ENCODE measurements at regions of chr20 and their contacts with region 1.

Region 1: GRCh38 chr20:1894951-1895673 is at the start of gene SIRPA:
- DNase-seq: peak in 2 of 3 donors; percentile 53 to 73
- H3K4me3 ChIP-seq: peak within 1 kb of the TSS; percentile 63 to 100 (median 80)
- H3K4me3 Mint-ChIP-seq: peak within 1 kb of the TSS; percentile 100
- H3K27ac ChIP-seq: peak within 1 kb of the TSS; percentile 77 to 98
- H3K27ac Mint-ChIP-seq: peak within 1 kb of the TSS; percentile 90 to 99 (median 95)
- H3K4me1 ChIP-seq: peaks cover 55 to 64% of the 10 kb centered on the region in 2 donors
- H3K4me1 Mint-ChIP-seq: peaks cover 76% of the 10 kb centered on the region
- H3K27me3 ChIP-seq: no peaks in the 10 kb centered on the region
- H3K27me3 Mint-ChIP-seq: peaks cover 0 to 2% (median 1%) of the 10 kb centered on the region in 3 donors
- CTCF ChIP-seq: no peak
- polyA plus RNA-seq, gene SIRPA: 28.4 to 126 (median 58.3) TPM

Region 2: GRCh38 chr20:1802385-1803060 is 92.6 kb before region 1 on chr20:
- intact Hi-C with region 1: loop called (anchors 1 to 2 kb)
- DNase-seq: peak; percentile 73 to 84 (median 83)
- H3K4me3 ChIP-seq: peak overlapping the region; percentile 55 to 78 (median 69)
- H3K4me3 Mint-ChIP-seq: peak overlapping the region; percentile 85 to 97
- H3K27ac ChIP-seq: peak overlapping the region; percentile 86 to 95
- H3K27ac Mint-ChIP-seq: peak overlapping the region; percentile 87 to 97 (median 94)
- H3K4me1 ChIP-seq: peaks cover 56 to 65% of the 10 kb centered on the region in 2 donors
- H3K4me1 Mint-ChIP-seq: peaks cover 56% of the 10 kb centered on the region
- H3K27me3 ChIP-seq: no peaks in the 10 kb centered on the region
- H3K27me3 Mint-ChIP-seq: peaks cover 0 to 1% (median 0%) of the 10 kb centered on the region in 3 donors
- CTCF ChIP-seq: peak; percentile 82

Region 3: DNA sequence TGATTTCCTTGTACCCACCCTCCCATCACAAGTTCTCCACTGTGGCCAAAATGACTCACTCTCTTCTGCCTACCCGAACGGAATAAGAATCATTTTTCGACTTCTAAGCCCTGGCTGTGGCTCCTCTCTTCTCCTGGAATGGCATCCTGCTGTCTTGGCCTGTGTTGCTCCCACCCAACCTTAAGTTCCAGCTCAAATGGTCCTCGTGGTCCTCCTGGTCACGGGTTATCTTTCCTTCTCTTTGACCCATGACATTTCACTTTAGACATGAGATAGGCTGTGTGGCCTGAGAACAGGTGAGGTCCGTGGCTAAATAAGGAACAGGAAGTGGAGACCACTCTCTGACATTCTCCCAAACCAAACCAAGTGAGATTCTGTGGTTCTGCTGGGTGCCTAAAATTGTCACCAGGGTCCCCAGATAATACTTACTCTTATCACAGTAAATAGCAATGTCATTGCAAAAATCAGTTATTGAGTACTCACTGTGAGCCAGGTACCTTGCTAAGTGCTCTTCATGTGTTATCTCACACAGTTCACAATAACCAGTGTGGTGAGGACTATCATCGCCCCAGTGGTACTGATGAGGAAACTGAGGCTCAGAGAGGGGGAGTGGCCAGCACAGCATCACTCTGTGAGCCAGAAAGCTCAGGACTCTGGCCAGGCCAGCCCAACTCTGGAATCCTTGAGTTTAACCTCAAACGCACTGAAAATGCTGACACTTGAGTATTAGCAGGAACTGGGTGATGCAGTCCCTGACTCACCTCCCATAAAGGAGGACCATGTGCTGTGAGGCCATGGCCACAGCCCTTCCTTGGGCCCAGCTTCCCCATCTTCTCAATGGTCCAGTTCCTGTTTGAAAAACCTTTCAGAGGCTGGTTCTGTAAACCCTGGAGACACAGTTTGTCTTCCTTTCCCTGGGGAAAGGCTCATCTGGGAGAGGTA is 74.7 kb before region 1 on chr20:
- intact Hi-C with region 1: loop called in 1 of 2 experiments (anchors 5 kb)
- DNase-seq: peak; percentile 94 to 99 (median 97)
- H3K4me3 ChIP-seq: peak overlapping the region in 1 of 3 experiments; percentile 4
- H3K4me3 Mint-ChIP-seq: peak overlapping the region; percentile 49 to 57
- H3K27ac ChIP-seq: peak overlapping the region; percentile 98
- H3K27ac Mint-ChIP-seq: peak overlapping the region; percentile 98 to 100 (median 100)
- H3K4me1 ChIP-seq: peaks cover 87 to 91% of the 10 kb centered on the region in 2 donors
- H3K4me1 Mint-ChIP-seq: peaks cover 89% of the 10 kb centered on the region
- H3K27me3 ChIP-seq: no peaks in the 10 kb centered on the region
- H3K27me3 Mint-ChIP-seq: peaks cover 0 to 4% (median 1%) of the 10 kb centered on the region in 3 donors
- CTCF ChIP-seq: no peak

Region 4: GRCh38 chr20:1844325-1845162 is 50.6 kb before region 1 on chr20:
- intact Hi-C with region 1: loop called in 1 of 2 experiments (anchors 2 kb)
- DNase-seq: peak; percentile 86 to 94 (median 94)
- H3K4me3 ChIP-seq: peak overlapping the region in 1 of 3 experiments; percentile 22
- H3K4me3 Mint-ChIP-seq: peak overlapping the region in 1 of 2 donors; percentile 31
- H3K27ac ChIP-seq: peak overlapping the region; percentile 75 to 82
- H3K27ac Mint-ChIP-seq: peak overlapping the region; percentile 87 to 98 (median 95)
- H3K4me1 ChIP-seq: peaks cover 95 to 97% of the 10 kb centered on the region in 2 donors
- H3K4me1 Mint-ChIP-seq: peaks cover 95% of the 10 kb centered on the region
- H3K27me3 ChIP-seq: no peaks in the 10 kb centered on the region
- H3K27me3 Mint-ChIP-seq: peaks cover 1 to 10% (median 4%) of the 10 kb centered on the region in 3 donors
- CTCF ChIP-seq: no peak

Region 5: DNA sequence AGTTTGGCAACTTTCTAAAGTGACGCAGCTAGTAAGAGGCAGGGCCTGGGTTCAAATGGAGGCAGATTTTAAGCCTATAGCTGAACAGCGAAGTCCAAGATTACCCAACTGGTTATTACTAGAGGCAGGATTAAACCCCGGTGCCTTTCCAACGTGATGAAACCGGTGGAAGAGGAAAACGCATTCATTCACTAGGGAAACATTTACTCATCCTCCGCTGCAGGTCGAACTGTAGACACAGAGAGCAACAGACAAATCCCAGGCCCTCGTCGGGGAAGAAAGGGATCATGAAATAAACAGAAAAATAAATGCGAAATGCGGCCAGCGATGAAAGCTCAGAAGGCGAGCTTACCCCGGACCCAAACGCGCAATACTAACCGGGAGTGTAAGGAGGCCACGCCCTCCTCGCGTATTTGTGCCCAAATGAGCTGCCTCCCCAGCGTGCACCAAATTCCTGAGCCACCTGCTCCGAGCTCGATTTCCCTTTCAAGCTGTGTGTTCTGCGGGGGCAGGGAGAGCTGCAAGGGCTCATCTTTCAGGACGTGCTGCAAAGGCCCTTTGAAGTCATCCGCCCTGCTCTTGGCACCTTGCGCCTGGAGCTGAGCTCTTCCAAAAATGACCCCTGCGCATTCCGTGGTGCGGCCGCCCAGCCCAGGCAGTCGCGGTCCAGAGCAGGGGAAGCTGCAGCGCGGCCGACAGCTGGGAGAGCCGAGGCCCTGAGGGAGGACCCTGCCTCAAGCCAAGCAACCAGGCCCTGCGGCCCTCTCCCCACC is 51.8 kb after region 1 on chr20:
- intact Hi-C with region 1: loop called (anchors 5 to 10 kb)
- DNase-seq: peak; percentile 95 to 97 (median 95)
- H3K4me3 ChIP-seq: peak overlapping the region; percentile 19 to 72 (median 29)
- H3K4me3 Mint-ChIP-seq: peak overlapping the region; percentile 79 to 95
- H3K27ac ChIP-seq: peak overlapping the region; percentile 96 to 97
- H3K27ac Mint-ChIP-seq: peak overlapping the region; percentile 97 to 100 (median 99)
- H3K4me1 ChIP-seq: peaks cover 88 to 95% of the 10 kb centered on the region in 2 donors
- H3K4me1 Mint-ChIP-seq: peaks cover 92% of the 10 kb centered on the region
- H3K27me3 ChIP-seq: no peaks in the 10 kb centered on the region
- H3K27me3 Mint-ChIP-seq: peaks cover 0 to 1% (median 0%) of the 10 kb centered on the region in 3 donors
- CTCF ChIP-seq: no peak

Region 6: DNA sequence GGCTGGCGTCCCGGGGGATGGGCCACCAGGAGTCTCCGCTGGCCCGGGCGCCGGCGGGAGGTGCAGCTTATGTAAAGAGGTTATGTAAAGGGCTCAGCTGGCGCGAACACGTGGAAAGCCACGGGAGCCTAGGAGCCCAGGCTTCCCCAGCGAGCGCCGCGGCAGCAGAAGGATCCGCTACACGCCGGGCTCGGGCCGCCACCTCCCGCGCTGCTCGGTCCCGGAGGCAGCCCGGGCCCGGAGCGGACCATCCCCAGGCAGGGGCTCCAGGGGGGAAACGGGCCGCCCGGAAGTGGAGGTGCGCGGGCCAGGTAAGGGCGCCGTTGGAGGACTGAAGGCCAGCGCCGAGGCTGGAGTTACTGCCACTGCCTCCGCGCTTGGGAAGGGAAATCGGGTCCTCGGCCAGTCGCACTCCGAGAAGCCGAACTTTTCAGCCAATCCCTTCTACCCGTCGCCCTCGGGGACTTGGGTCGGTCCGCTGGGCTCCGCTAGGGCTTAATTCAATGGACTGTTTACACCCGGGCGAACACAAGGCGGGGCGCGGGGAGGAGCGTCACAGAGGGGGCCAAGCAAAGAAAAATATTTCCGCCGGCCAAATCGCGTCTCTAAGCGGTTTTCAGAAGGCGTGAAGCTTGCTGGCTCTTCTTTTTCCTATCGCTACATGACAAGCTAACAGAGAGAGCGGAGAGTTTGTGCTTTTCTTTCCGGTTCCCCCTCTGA is 206.9 kb after region 1 on chr20:
- intact Hi-C with region 1: loop called in 1 of 2 experiments (anchors 5 kb)
- DNase-seq: peak; percentile 89 to 90 (median 89)
- H3K4me3 ChIP-seq: peak overlapping the region; percentile 72 to 92 (median 81)
- H3K4me3 Mint-ChIP-seq: peak overlapping the region; percentile 80 to 92
- H3K27ac ChIP-seq: peak overlapping the region; percentile 99 to 100
- H3K27ac Mint-ChIP-seq: peak overlapping the region; percentile 98 to 100 (median 100)
- H3K4me1 ChIP-seq: peaks cover 24 to 33% of the 10 kb centered on the region in 2 donors
- H3K4me1 Mint-ChIP-seq: peaks cover 40% of the 10 kb centered on the region
- H3K27me3 ChIP-seq: no peaks in the 10 kb centered on the region
- H3K27me3 Mint-ChIP-seq: peaks cover 0 to 2% (median 0%) of the 10 kb centered on the region in 3 donors
- CTCF ChIP-seq: no peak

Measured in CD14-positive monocyte (primary cell).